Mammary epithelial cell (primary cell): ENCODE measurements at regions of chr14 and their contacts with region 1.

Region 1: GRCh38 chr14:64387694-64388532 is at the start of gene MTHFD1:
- DNase-seq: peak; percentile 99
- H3K4me3 ChIP-seq: peak within 1 kb of the TSS; percentile 69 to 92 (median 88)
- H3K27ac ChIP-seq: peak within 1 kb of the TSS; percentile 75
- H3K4me1 ChIP-seq: no peaks in the 10 kb centered on the region
- H3K27me3 ChIP-seq: no peaks in the 10 kb centered on the region
- CTCF ChIP-seq: no peak
- total RNA-seq, gene MTHFD1: 39.5 to 117 TPM

Region 2: DNA sequence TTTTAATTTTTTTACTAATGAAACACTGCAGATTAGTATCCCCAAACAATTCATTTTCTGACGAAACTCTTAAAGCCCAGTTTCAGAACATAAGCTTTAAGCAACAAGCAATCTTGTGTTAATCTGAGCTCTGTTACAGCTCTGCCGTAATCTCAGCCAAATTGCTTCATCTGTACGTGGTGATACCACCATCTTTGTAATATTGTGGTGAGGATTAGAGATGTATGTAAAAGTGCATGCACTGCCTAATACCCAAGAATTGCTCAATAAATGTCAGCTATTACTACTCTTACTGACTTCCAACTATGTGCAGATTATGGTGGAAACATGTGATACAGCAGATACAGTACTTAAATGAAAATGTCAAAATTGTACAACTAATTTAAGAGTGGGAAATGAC is 79.2 kb after region 1 on chr14:
- CTCF ChIA-PET with region 1: interaction called, 12 read pairs
- dilution Hi-C with region 1: no loop called
- in situ Hi-C with region 1: no loop called
- intact Hi-C with region 1: no loop called
- DNase-seq: no peak
- H3K4me3 ChIP-seq: no peak overlapping the region
- H3K27ac ChIP-seq: no peak overlapping the region
- H3K4me1 ChIP-seq: peaks cover 15% of the 10 kb centered on the region
- H3K27me3 ChIP-seq: no peaks in the 10 kb centered on the region
- CTCF ChIP-seq: no peak